Motor neuron (in vitro differentiated cells): ENCODE measurements at regions of chr2 and their contacts with region 1.

Region 1: GRCh38 chr2:16773080-16773713 is 107.6 kb upstream of the CYRIA start:
- ATAC-seq: peak; percentile 70 to 92 (median 86)
- H3K4me3 ChIP-seq: no peak overlapping the region
- H3K27ac ChIP-seq: no peak overlapping the region
- H3K4me1 ChIP-seq: peaks cover 2 to 16% of the 10 kb centered on the region in 2 donors

Region 2: DNA sequence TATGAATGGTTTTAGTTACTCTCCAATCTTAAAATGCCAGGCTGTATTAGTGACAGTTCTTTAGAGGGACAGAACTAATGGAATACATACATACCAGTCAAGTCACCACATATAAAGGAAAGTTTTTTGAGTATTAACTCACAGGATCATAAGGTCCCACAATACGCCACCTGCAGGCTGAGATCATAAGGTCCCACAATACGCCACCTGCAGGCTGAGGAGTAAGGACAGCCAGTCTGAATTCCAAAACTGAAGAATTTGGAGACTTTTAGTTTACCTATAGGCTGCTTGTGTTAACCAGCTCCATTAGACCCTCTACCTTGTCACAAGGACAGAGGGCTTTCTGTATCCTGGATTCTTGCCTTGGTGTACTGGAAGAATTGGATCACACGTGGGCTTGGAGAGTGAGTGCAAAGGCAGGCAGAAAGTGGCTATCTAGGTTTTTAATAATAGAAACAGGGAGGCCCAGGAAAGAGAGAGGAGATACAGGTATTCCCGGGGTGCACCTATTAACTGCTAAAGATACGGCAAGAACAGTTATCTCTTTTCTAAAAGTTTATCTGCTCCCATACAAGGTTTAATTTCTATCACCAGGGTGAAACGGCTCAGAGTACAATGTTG is 127.3 kb after region 1 on chr2:
- in situ Hi-C with region 1: loop called in 1 of 9 experiments (anchors 10 kb)
- ATAC-seq: peak in 2 of 8 experiments; percentile 18 to 55
- H3K4me3 ChIP-seq: no peak overlapping the region
- H3K27ac ChIP-seq: no peak overlapping the region
- H3K4me1 ChIP-seq: no peaks in the 10 kb centered on the region

Region 3: GRCh38 chr2:17043173-17043572 is 270.0 kb after region 1 on chr2:
- in situ Hi-C with region 1: no loop called
- ATAC-seq: peak in 1 of 8 experiments; percentile 56
- H3K4me3 ChIP-seq: no peak overlapping the region
- H3K27ac ChIP-seq: no peak overlapping the region
- H3K4me1 ChIP-seq: no peaks in the 10 kb centered on the region

Region 4: DNA sequence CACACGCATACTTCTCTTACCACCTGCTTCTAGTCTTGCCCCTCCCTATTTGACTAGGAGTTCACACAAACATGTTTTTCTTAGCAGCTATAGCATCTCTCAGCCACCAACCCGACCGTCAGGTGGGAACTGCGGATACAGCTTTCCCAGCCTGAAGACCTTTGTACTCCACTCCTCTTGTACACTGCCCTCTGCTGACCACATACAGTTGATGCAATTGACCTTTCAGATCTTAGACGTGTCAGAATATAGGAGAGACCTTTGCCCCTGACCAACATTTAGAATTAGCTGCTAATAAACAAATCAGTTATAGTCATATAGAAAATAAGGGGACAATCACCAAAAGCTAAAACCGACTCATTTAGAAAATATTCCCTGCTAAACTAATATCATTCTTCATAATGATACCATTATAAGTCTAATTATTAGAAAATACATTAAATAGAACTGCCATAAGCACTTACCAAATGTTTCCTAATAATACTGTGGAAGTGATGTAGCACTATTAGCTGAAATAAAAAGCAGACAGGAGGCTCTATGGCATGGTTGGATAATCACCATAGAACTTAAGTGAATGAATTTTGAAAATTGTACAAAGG is 536.6 kb after region 1 on chr2:
- in situ Hi-C with region 1: loop called in 3 of 9 experiments (anchors 25 kb)
- ATAC-seq: peak; percentile 46 to 90 (median 54)
- H3K4me3 ChIP-seq: no peak overlapping the region
- H3K27ac ChIP-seq: no peak overlapping the region
- H3K4me1 ChIP-seq: peaks cover 6% of the 10 kb centered on the region in 2 donors

Region 5: DNA sequence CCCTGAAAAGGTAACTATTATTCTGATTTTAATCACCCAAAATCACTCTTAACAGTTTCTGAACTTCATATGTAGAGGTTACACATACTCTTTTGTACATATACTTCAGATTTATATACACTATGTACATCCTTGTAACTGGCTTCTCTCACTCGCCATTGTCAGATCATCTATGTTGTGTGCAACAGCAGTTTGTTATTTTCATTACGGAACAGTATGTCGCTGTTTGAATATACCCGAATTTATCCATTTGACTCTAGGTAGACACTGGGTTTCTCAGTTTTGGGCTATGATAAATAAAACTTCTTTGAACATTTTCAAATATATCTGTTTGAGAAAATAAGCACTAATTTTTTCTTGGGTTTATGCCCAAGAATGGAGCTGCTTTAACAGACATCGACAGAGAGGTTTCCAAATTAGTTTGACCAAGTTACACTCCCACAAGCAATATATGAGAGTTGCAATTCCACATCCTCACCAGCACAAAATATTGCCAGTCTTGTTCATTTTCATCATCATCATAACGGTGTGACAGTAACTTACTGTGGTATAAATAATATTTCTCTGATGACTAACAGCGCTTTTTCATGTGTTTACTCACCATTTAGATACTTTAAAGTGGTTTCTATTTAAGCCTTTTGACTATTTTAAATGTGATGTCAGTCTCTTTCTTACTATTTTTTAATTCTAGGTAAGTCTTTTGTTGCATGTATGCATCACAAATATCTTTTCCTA is 899.6 kb after region 1 on chr2:
- in situ Hi-C with region 1: loop called in 6 of 9 experiments (anchors 10 to 25 kb)
- ATAC-seq: no peak
- H3K4me3 ChIP-seq: no peak overlapping the region
- H3K27ac ChIP-seq: no peak overlapping the region
- H3K4me1 ChIP-seq: no peaks in the 10 kb centered on the region